ENCODE measurements at regions of chr17 and their contacts with region 1.

Region 1: DNA sequence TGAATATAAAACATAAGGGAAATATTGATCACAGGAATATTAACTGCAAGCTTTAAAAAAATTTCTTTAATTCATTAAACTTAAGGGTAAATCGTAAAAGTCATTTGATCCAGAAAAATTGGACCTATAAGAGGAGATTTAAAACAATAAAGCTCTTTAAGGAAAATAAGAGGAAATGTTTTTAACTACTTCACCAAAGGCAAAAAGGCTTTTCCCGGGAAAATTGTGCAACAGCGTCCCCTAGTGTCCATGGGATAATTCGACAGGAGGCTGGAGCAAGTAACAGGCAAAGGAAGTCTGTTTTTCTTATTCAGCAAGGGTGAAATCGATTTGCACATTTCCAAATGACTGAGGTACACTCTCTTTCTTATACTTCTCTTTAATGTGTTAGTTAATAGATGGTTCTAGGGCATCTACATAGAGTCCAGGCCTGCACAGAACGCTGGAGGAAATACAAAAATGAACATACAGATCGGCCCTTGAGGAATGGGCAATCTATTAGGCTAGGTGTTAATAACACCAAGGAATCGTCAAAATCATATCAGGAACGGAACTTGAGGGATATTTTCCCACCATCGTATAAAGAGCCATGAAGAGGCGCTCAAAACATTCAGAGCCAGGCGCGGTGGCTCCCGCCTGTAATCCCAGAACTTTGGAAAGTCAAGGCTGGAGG is 61.4 kb downstream of the ZNF18 start:
- DNase-seq: peak; percentile 79
- H3K4me3 Mint-ChIP-seq: no peak overlapping the region
- H3K27ac Mint-ChIP-seq: no peak overlapping the region
- H3K4me1 Mint-ChIP-seq: peaks cover 5% of the 10 kb centered on the region
- H3K27me3 Mint-ChIP-seq: no peaks in the 10 kb centered on the region
- CTCF ChIP-seq: peak; percentile 94

Region 2: DNA sequence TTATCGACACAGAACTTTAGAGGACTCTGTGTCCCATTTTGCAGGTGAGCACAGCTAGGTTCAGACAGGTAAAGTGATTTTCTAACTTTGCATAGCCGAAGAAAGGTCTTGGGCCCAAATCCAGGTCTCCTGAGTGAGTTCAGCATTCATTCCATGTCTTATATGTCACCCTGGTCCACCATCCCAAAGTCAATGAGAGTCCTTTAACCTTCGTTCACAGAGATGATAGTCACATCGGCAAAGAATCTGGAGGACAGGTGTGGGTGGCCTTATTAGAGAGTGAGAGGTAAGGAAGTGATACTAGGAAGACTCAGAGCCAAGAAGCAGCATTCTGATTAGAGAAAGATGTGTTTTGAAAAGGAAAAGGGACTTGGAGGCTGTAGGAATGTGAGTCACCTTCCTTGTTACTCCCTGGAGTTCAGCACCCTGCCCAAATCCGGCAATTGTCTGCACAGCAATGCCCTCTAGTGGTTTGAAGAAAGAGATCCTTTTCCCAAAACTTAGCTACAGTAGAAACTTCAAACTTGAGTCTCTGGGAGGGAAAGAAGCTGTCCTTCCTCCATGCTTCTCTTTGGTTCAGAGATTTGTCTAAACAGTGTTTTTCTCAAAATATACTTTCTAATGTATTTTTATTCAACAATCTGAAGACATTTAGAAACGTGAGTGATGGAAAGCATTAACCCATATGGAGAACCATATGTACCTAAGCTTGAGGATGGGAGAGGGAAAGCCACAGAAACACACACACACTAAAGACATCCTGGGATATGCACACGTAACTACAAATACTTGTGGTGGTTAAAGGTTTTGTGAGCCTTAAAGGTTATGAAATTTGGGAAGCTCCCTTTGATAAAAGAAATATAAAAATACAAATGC is 791.3 kb before region 1 on chr17:
- CTCF ChIA-PET with region 1: interaction called, 16 read pairs
- POLR2A ChIA-PET with region 1: no interaction called
- intact Hi-C with region 1: loop called (anchors 1 kb)
- DNase-seq: peak; percentile 46
- H3K4me3 Mint-ChIP-seq: no peak overlapping the region
- H3K27ac Mint-ChIP-seq: no peak overlapping the region
- H3K4me1 Mint-ChIP-seq: peaks cover 14% of the 10 kb centered on the region
- H3K27me3 Mint-ChIP-seq: no peaks in the 10 kb centered on the region
- CTCF ChIP-seq: peak; percentile 74

Region 3: DNA sequence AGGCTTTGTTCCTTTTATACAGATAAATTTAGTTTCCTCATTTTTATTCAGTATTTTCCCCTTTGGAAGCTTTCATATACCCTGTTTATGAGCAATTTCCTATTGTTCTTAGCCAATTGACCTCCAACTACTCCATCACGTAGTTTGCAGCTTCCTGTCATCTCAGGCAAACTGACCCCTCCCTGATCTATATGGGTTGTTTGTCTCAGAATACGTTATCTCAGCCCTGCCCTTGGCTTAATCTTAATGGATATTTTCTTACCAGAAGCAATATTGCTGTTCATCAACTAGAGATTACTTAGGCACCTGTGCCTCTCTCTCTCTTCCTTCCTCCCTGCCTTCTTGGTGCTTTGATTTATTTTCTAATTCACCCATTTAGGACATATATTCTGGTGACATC is 19.8 kb before region 1 on chr17:
- CTCF ChIA-PET with region 1: interaction called, 11 read pairs
- POLR2A ChIA-PET with region 1: no interaction called
- intact Hi-C with region 1: no loop called
- DNase-seq: no peak
- H3K4me3 Mint-ChIP-seq: no peak overlapping the region
- H3K27ac Mint-ChIP-seq: no peak overlapping the region
- H3K4me1 Mint-ChIP-seq: no peaks in the 10 kb centered on the region
- H3K27me3 Mint-ChIP-seq: peaks cover 19% of the 10 kb centered on the region
- CTCF ChIP-seq: no peak

Region 4: GRCh38 chr17:11925262-11926021 is 10.4 kb before region 1 on chr17:
- CTCF ChIA-PET with region 1: interaction called, 13 read pairs
- POLR2A ChIA-PET with region 1: no interaction called
- intact Hi-C with region 1: no loop called
- DNase-seq: no peak
- H3K4me3 Mint-ChIP-seq: no peak overlapping the region
- H3K27ac Mint-ChIP-seq: no peak overlapping the region
- H3K4me1 Mint-ChIP-seq: peaks cover 6% of the 10 kb centered on the region
- H3K27me3 Mint-ChIP-seq: no peaks in the 10 kb centered on the region
- CTCF ChIP-seq: no peak

Region 5: DNA sequence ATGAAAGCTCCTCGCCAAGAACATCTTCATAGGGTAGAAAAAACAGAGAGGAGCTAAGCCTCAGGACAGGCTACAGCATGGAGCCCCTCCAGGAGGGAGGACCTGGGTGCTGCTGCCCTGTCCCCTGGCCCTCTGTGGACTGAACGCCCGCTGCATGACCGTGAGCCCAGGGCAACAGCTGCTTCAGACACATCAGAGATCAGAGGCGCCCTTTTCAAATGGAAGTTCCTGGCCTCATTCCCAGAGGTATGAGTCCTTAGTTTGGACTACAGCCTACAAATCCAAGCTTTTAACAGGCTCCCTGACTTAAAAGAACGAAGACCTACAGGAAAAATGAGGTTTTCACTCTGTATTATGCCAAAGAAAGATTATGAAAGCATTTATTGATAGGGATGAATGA is 12.9 kb after region 1 on chr17:
- CTCF ChIA-PET with region 1: interaction called, 27 read pairs
- POLR2A ChIA-PET with region 1: interaction called, 11 read pairs
- intact Hi-C with region 1: no loop called
- DNase-seq: peak; percentile 91
- H3K4me3 Mint-ChIP-seq: peak overlapping the region; percentile 55
- H3K27ac Mint-ChIP-seq: peak overlapping the region; percentile 28
- H3K4me1 Mint-ChIP-seq: peaks cover 31% of the 10 kb centered on the region
- H3K27me3 Mint-ChIP-seq: no peaks in the 10 kb centered on the region
- CTCF ChIP-seq: no peak

Region 6: DNA sequence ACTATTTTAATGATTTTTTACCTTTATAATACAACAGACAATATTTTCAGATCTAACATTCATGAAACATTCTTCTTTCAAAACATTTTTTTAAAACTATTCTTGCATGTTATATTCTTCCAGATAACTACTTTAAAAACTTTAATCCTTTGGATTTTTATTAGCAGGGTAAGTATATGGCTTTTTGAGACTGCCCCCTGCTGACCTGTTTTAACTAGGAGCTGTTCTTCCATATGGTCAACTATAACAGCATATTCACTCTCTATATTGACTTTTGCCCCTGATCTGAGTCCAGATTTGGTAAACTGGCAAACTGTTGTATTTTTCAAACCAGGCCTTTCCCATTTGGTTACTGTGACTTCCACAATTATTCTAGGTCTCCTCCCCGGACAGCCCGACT is 44.9 kb after region 1 on chr17:
- CTCF ChIA-PET with region 1: interaction called, 48 read pairs
- POLR2A ChIA-PET with region 1: interaction called, 3 read pairs
- intact Hi-C with region 1: loop called (anchors 5 kb)
- DNase-seq: peak; percentile 38
- H3K4me3 Mint-ChIP-seq: no peak overlapping the region
- H3K27ac Mint-ChIP-seq: no peak overlapping the region
- H3K4me1 Mint-ChIP-seq: peaks cover 17% of the 10 kb centered on the region
- H3K27me3 Mint-ChIP-seq: no peaks in the 10 kb centered on the region
- CTCF ChIP-seq: peak; percentile 39